WTC11 (cell line): ENCODE measurements at regions of chr12 and their contacts with region 1.

Region 1: DNA sequence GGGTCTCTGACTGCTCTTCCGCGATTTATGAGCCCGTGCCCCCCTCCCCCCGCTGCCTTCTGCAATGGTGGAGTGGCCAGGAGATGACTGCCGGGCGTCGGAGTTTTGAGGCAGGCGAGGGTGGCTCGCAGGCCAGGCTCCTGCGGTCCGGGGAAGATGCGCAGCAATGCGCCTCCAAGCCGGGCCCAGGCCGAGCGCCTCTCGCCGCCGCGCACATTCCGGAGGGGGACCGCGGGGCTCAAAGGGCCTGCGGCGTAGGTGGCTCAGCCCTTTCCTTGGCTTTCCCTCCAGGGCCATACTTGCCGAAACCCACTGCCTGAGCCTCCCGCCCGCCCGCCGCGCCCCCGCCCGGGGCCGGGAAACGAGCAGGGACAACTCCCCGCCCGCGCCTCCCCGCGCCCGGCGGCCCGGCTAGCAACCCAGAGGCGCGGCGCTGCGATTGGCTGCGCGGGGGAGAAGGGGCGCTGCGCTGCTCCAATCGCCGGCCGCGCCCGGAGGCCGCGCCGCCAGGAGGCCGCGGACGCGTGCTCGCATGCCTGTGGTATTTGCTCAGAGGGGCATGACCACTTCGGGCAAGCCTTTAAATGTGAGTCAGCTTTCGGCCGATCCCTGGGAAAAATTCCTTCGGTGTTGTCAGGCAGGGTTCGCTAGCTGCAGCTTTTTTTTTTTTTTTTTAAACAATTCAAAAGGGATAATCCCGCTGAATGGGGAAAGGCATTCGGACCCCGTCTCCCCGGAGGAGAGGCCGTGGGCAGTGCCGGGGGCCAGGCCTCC is 157.9 kb upstream of the PARP11 start:
- DNase-seq: peak; percentile 91
- ATAC-seq: peak; percentile 86
- H3K4me3 Mint-ChIP-seq: peak overlapping the region; percentile 43
- H3K27ac Mint-ChIP-seq: peak overlapping the region; percentile 52
- H3K4me1 Mint-ChIP-seq: peaks cover 64% of the 10 kb centered on the region
- H3K27me3 Mint-ChIP-seq: peaks cover 38% of the 10 kb centered on the region
- CTCF ChIP-seq: no peak

Region 2: DNA sequence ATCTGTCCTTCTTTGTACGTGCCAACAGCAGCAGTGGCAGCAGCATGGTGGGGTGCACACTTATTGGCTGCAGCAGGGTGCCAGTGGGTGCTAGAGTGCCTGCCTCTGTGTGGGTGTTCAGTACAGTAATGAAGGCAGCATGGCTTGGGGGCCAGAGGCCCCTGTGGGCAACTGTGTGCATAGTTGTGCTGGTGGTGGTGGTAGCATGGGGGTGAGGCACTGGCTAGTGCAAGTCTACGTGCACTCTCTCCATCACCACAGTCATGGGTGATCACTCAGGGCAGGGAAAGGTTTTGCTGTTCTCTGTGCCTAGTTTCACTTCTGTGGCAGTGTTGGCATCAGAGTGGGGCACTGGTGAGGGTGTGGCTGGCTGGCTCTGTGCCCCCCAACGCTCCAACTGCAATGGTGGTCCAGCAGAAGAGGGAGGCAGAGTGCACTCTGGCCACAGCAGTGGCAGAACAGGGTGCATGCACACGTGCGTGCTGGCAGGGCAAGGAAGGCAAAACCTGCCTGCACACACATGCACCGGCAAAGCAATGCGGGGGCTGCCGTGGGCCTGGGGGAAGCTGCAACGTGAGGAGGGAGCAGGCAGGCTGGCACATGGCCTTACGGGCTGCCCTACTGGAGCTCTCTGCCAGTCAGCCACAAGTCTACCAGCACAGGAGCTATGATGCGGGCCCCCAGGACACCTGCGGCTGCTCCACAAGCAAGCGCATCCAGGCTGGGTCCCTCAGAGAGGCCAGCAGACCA is 338.3 kb before region 1 on chr12:
- CTCF ChIA-PET with region 1: no interaction called
- POLR2A ChIA-PET with region 1: no interaction called
- DNase-seq: no peak
- ATAC-seq: no peak
- H3K4me3 Mint-ChIP-seq: no peak overlapping the region
- H3K27ac Mint-ChIP-seq: no peak overlapping the region
- H3K4me1 Mint-ChIP-seq: no peaks in the 10 kb centered on the region
- H3K27me3 Mint-ChIP-seq: peaks cover 4% of the 10 kb centered on the region; the same call in 1 of the 2 replicates
- CTCF ChIP-seq: no peak

Region 3: GRCh38 chr12:3998968-3999826 is 31.9 kb before region 1 on chr12:
- CTCF ChIA-PET with region 1: interaction called, 36 read pairs
- POLR2A ChIA-PET with region 1: interaction called, 12 read pairs
- DNase-seq: no peak
- ATAC-seq: no peak
- H3K4me3 Mint-ChIP-seq: no peak overlapping the region
- H3K27ac Mint-ChIP-seq: no peak overlapping the region
- H3K4me1 Mint-ChIP-seq: peaks cover 25% of the 10 kb centered on the region
- H3K27me3 Mint-ChIP-seq: peaks cover 14% of the 10 kb centered on the region
- CTCF ChIP-seq: no peak